ENCODE measurements at regions of chr10 and their contacts with region 1.

Region 1: GRCh38 chr10:31004611-31005193 is 27.0 kb downstream of the ZNF438 start:
- DNase-seq: peak; percentile 97
- H3K4me3 ChIP-seq: peak overlapping the region in 1 of 3 experiments; percentile 11
- H3K27ac ChIP-seq: peak overlapping the region; percentile 95
- H3K4me1 ChIP-seq: peaks cover 70% of the 10 kb centered on the region
- H3K27me3 ChIP-seq: no peaks in the 10 kb centered on the region
- CTCF ChIP-seq: no peak
- POLR2A ChIP-seq: peak; percentile 67

Region 2: DNA sequence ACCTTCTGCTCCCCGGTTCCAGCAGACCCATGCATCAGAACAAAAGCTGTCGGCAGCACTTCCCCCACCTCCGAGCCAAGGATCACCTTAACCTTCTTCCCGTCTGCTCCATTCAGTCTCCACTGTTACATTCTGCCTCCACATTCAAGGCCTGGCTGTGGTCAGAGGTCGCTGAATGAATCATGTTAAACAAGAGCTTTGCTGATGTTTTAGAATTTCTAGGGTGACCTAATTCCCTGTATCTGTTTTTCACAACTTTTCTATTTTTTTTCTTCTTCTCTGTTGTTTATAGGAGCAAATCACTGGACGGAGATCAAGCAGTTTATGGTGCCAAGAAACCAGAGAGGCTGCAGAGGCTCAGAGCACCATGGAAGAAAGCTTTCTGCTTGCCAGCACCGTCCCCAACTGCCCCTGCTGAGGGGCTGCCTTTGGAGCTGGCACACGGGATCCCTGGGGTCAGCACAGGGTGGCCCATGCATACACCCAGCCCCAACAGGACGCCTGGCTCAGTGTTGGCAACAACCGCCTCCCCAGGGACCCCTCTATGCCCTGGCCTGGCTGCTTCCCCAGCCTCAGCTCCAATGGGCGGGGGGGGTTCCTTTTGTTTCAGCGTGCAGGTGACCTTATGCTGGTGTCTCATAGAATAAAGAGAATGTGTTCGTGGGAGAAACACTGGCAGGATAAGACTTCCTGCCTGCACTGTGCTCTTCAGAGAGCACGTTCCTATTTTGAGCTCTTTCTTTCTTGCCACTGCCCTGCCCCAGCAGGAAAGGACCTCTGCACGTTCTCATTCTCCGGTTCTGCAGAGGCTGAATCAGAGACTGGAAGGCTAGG is 192.5 kb before region 1 on chr10:
- CTCF ChIA-PET with region 1: interaction called, 5 read pairs
- POLR2A ChIA-PET with region 1: interaction called, 6 read pairs
- dilution Hi-C with region 1: no loop called
- intact Hi-C with region 1: loop called (anchors 2 kb)
- DNase-seq: peak; percentile 96
- H3K4me3 ChIP-seq: no peak overlapping the region
- H3K27ac ChIP-seq: peak overlapping the region; percentile 96
- H3K4me1 ChIP-seq: peaks cover 54% of the 10 kb centered on the region
- H3K27me3 ChIP-seq: no peaks in the 10 kb centered on the region
- CTCF ChIP-seq: no peak
- POLR2A ChIP-seq: peak; percentile 29

Region 3: DNA sequence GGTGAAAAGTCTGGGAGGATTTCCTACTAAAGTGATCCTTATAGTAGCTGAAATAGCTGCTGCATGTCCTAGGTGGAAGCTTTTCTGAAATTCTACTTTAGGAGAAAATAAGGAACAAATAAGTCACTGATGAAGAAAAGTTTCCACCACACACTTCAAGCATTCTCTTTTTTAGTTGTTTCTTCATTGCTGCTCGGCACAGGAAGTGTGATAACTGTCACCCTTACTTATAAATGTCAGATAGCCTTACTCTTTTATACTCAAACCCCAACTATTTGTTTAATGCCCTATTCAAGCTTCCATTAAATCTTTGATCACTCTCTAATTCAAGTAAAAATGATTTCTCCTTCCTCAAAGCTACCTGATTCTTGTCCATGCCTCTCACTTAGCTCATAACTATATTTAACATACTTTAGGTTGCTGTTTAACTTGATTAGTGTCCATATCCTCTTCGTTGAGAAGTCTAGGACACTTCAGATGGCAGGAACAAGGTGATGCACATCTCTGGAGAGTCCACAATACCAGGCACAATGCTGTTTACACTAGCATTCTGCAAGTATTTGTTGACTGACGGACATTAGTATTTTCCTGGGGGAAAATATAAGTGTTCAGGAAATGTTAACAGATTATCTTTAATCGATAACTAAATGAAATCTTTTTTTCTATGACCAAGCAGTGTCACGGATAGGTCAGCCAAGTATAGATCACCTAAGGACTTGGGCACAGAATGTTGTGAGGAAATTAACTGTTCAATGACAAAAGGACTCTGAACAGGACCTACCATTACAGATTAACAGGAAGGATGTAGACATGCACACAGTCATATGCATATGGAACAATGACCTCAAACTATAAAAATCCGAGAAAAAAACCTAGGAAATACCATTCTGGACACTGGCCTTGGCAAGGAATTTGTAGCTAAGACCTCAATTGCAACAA is 40.4 kb before region 1 on chr10:
- CTCF ChIA-PET with region 1: interaction called, 4 read pairs
- POLR2A ChIA-PET with region 1: no interaction called
- dilution Hi-C with region 1: no loop called
- intact Hi-C with region 1: loop called (anchors 1 kb)
- DNase-seq: peak; percentile 81
- H3K4me3 ChIP-seq: peak overlapping the region in 1 of 3 experiments; percentile 30
- H3K27ac ChIP-seq: peak overlapping the region; percentile 99
- H3K4me1 ChIP-seq: peaks cover 45% of the 10 kb centered on the region
- H3K27me3 ChIP-seq: no peaks in the 10 kb centered on the region
- CTCF ChIP-seq: no peak
- POLR2A ChIP-seq: peak; percentile 32

Region 4: DNA sequence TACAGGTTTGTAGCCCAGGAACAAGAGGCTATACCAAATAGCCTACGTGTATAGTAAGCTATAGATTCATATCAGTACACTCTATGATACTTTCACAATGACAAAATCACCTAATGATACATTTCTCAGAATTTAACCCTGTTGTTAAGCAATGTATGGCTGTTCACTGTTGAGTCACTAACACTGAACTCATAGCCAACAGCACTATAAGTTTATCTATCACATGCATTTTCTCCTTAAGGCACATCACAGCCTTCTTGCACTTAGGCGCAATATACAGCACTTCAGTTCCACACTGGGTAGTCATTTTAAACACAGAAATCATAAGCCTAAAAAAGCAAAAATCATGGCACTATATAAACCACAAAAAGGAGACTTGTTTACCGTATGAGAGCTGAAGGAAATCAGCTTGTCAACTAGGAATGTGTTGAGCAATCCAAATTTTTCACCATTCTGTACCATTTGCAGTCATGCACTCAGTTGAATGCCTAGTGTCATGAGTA is 18.6 kb before region 1 on chr10:
- CTCF ChIA-PET with region 1: interaction called, 12 read pairs
- POLR2A ChIA-PET with region 1: interaction called, 6 read pairs
- dilution Hi-C with region 1: no loop called
- intact Hi-C with region 1: loop called (anchors 1 kb)
- DNase-seq: peak; percentile 69
- H3K4me3 ChIP-seq: no peak overlapping the region
- H3K27ac ChIP-seq: peak overlapping the region; percentile 93
- H3K4me1 ChIP-seq: peaks cover 56% of the 10 kb centered on the region
- H3K27me3 ChIP-seq: no peaks in the 10 kb centered on the region
- CTCF ChIP-seq: no peak
- POLR2A ChIP-seq: no peak

Region 5: DNA sequence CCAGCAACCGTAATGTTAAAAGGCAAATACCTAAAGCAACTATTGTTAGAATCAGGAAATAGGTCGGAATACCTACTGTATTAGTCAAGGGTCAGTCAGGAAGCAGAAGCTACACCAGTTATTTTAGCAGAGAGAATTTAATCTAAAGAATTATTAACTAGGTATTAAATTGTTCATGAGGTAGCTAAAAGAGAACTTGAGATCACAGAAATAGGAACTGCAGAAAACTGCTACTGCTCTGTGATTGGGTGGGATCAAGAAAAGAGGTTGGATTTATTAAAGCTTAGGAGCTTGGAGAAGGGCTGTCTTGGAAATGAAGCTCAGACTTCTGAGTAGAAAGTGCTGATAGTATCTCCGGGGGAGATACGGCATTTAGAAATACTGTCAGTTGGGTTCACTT is 47.0 kb after region 1 on chr10:
- CTCF ChIA-PET with region 1: no interaction called
- POLR2A ChIA-PET with region 1: no interaction called
- dilution Hi-C with region 1: no loop called
- intact Hi-C with region 1: loop called (anchors 5 kb)
- DNase-seq: peak; percentile 69
- H3K4me3 ChIP-seq: peak overlapping the region in 1 of 3 experiments; percentile 53
- H3K27ac ChIP-seq: peak overlapping the region; percentile 99
- H3K4me1 ChIP-seq: peaks cover 32% of the 10 kb centered on the region
- H3K27me3 ChIP-seq: no peaks in the 10 kb centered on the region
- CTCF ChIP-seq: no peak
- POLR2A ChIP-seq: no peak

Region 6: DNA sequence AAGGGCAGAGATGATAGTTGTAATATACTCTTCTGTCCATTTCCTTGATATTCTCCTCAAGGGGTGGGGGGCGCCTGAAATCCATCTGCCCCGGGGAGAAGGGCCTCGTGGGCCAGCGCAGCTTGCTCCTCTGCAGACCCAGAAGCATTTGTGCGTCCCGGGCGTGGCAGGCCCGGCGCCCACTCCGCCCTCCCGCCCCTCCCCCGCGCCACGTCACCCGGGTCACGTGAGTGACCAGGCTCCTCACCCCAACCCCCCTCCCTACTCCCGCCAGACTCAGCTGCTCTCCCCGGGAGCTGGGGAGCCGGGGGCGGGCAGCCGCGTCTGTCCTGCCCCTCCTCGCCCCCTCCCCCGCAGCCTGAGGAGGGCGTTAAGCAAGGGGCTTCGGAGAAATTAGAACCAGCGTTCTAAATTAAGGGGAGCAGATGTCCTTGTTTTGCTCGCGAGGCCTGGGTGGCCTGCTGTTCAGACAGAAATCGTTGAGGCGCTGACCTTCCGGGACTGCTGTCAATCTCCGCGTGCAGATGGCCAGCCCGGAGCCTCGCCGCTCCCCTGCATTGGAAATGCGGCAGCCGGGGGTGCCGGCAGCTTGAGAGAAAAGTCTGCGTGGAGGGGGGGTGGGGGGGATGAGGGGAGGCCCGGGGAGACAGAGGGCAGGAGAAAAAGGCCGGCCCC is 129.1 kb after region 1 on chr10:
- CTCF ChIA-PET with region 1: no interaction called
- POLR2A ChIA-PET with region 1: no interaction called
- dilution Hi-C with region 1: no loop called
- intact Hi-C with region 1: loop called (anchors 10 kb)
- DNase-seq: peak; percentile 58
- H3K4me3 ChIP-seq: peak overlapping the region in 2 of 3 experiments; percentile 3 to 19
- H3K27ac ChIP-seq: peak overlapping the region; percentile 96
- H3K4me1 ChIP-seq: peaks cover 21% of the 10 kb centered on the region
- H3K27me3 ChIP-seq: no peaks in the 10 kb centered on the region
- CTCF ChIP-seq: no peak
- POLR2A ChIP-seq: no peak

Measured in endothelial cell of umbilical vein (primary cell).